ENCODE measurements at regions of chr14 and their contacts with region 1.

Region 1: DNA sequence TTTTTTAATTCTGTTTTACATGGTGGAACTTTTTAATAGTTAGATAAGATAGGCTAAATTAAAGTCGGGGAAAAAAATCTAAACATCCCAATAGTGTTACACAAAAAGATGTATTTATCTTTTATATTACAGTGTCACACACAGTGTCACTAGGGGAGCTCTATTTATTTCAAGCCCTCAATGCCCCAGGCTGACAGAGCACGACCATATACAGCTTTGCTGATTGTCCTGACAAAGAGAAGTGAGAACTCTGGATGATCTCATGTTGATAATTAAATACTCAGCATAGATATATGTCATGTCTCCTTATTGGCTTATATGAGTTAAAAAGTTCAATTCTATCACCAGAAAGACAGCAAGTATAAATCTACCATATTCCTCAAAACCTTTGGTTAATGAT is 594.3 kb downstream of the LRFN5 start:
- DNase-seq: no peak
- ATAC-seq: no peak
- H3K4me3 ChIP-seq: no peak overlapping the region
- H3K27ac ChIP-seq: peak overlapping the region; percentile 25; the same call in 1 of the 2 replicates
- H3K4me1 ChIP-seq: no peaks in the 10 kb centered on the region
- H3K27me3 ChIP-seq: no peaks in the 10 kb centered on the region
- CTCF ChIP-seq: no peak; the same call in 1 of the 2 replicates

Region 2: DNA sequence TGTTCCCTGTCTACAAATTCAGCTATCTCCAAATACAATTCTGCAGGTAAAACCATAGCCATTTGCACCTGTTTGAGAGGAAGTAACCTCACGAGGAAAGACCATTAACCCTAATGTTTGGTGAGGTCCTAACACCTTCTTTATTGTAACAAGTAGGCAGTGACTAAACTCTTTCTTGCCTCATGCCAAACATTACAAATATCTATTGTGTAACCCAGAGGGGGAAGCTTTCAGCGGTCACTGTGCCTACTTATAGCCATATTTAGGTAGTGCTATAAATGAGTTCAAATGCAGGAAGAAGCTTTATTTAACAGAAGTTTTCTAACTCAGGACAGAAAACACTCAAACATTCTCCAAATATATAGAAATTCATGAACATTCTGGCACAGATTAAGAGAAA is 341.6 kb before region 1 on chr14:
- CTCF ChIA-PET with region 1: interaction called, 10 read pairs
- POLR2A ChIA-PET with region 1: no interaction called
- in situ Hi-C with region 1: no loop called
- intact Hi-C with region 1: no loop called
- DNase-seq: no peak
- ATAC-seq: no peak
- H3K4me3 ChIP-seq: no peak overlapping the region
- H3K27ac ChIP-seq: no peak overlapping the region
- H3K4me1 ChIP-seq: no peaks in the 10 kb centered on the region
- H3K27me3 ChIP-seq: no peaks in the 10 kb centered on the region
- CTCF ChIP-seq: no peak

Measured in Panc1 (cell line).